AG04450 (cell line): ENCODE measurements at regions of chr14 and their contacts with region 1.

Region 1: GRCh38 chr14:91177073-91178034 is 63.5 kb downstream of the DGLUCY start:
- DNase-seq: no peak
- H3K4me3 ChIP-seq: no peak overlapping the region
- H3K27ac ChIP-seq: no peak overlapping the region
- H3K27me3 ChIP-seq: no peaks in the 10 kb centered on the region
- CTCF ChIP-seq: peak; percentile 83

Region 2: GRCh38 chr14:90903101-90903500 is 274.3 kb before region 1 on chr14:
- CTCF ChIA-PET with region 1: interaction called, 320 read pairs
- POLR2A ChIA-PET with region 1: no interaction called
- DNase-seq: peak; percentile 15
- H3K4me3 ChIP-seq: no peak overlapping the region
- H3K27ac ChIP-seq: no peak overlapping the region
- H3K27me3 ChIP-seq: no peaks in the 10 kb centered on the region
- CTCF ChIP-seq: peak; percentile 72

Region 3: DNA sequence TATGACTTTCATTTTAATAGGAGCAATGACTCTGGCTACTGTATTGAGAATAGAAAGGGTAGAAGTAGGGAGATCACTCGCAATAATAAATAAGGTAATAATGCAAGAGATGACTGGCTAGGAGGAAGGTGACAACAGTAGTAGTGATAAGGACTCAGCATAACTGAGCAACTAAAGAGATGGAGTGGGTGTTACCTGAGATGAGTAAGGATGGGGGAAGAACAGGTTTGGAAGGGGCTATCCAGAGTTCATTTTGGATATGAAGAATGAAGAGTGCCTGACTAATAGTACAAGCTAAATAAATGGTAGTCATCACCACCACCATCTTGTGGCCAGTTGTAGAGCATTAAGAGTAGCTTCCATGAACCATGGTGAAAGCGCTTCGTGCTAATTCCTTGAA is 218.0 kb before region 1 on chr14:
- CTCF ChIA-PET with region 1: no interaction called
- POLR2A ChIA-PET with region 1: no interaction called
- DNase-seq: no peak
- H3K4me3 ChIP-seq: no peak overlapping the region
- H3K27ac ChIP-seq: no peak overlapping the region
- H3K27me3 ChIP-seq: peaks cover 5% of the 10 kb centered on the region
- CTCF ChIP-seq: no peak

Region 4: GRCh38 chr14:90987140-90987539 is 190.2 kb before region 1 on chr14:
- CTCF ChIA-PET with region 1: no interaction called
- POLR2A ChIA-PET with region 1: no interaction called
- DNase-seq: no peak
- H3K4me3 ChIP-seq: no peak overlapping the region
- H3K27ac ChIP-seq: no peak overlapping the region
- H3K27me3 ChIP-seq: no peaks in the 10 kb centered on the region
- CTCF ChIP-seq: no peak

Region 5: DNA sequence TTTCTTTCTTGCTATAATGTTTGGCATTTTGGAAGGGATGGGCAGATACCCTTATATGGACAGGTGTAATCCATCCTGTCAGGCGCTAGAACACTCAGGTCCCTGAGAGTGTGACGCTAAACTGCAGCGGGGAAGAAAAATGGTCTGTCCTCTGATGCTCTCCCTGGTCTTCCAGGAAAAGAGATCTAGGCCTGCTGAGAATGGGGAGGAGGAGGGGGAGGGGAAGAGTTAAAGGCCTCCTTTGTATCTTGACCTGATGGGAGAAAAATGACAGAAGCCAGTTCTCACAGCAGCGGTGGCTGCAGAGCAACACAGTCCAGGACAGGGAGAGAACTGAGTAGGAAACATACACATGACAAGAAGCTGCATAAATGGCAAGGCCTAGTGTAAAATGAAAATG is 178.1 kb before region 1 on chr14:
- CTCF ChIA-PET with region 1: interaction called, 17 read pairs
- POLR2A ChIA-PET with region 1: no interaction called
- DNase-seq: no peak
- H3K4me3 ChIP-seq: no peak overlapping the region
- H3K27ac ChIP-seq: no peak overlapping the region
- H3K27me3 ChIP-seq: no peaks in the 10 kb centered on the region
- CTCF ChIP-seq: no peak

Region 6: GRCh38 chr14:91088585-91089235 is 88.6 kb before region 1 on chr14:
- CTCF ChIA-PET with region 1: no interaction called
- POLR2A ChIA-PET with region 1: no interaction called
- DNase-seq: no peak
- H3K4me3 ChIP-seq: no peak overlapping the region
- H3K27ac ChIP-seq: no peak overlapping the region
- H3K27me3 ChIP-seq: peaks cover 9% of the 10 kb centered on the region
- CTCF ChIP-seq: no peak

Region 7: DNA sequence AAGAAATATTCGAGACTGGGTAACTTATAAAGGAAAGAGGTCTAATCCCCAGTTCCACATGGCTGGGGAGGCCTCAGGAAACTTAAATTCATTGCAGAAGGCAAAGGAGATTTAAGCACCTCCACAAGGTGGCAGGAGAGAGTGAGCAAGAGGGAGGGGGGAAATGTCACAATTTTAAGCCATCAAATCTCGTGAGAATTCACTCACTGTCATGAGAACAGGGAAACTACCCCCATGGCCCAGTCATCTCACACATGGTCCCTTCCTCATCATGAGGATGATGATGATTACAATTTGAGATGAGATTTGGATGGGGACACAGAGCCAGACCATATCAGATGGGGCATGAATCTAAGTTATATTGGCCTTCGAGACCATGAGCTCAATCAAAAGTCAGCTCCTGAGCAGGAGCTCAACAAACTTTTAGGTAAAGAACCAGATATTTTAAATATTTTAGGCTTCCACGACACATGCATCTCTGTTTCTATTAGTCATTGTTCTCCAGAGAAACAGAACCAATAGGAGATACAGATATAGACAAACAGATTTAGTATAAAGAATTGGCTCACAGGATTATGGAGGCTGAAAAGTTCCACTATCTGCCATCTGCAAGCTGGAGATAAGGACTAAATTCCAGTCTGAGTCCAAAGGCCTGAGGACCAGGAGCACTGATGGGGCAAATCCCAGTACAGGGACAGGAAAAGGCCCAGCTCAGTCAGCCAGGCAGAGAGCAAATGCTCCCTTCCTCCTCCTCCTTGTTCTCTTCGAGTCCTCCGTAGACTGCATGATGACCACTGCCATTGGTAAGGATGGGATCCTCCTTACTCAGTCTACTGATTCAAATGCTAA is 38.6 kb before region 1 on chr14:
- CTCF ChIA-PET with region 1: interaction called, 37 read pairs
- POLR2A ChIA-PET with region 1: no interaction called
- DNase-seq: no peak
- H3K4me3 ChIP-seq: no peak overlapping the region
- H3K27ac ChIP-seq: no peak overlapping the region
- H3K27me3 ChIP-seq: no peaks in the 10 kb centered on the region
- CTCF ChIP-seq: peak; percentile 54

Region 8: DNA sequence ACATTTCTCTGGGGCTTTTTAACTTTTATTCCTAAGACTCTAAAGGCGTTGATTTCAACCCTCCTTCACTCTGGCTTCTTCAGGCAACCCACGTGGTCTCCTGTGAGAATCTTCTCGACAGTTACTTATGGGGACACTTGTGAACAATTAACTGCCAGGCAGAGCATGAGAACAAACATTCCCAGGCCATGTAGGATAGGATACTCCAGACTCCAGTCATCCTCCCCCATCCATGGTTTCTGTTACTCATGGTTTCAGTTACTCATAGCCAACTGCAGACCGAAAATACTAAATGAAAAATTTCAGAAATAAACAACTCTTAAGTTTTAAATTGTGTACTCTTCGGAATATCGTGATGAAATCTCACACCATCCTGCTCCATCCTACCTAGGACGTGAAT is 47.7 kb after region 1 on chr14:
- CTCF ChIA-PET with region 1: no interaction called
- POLR2A ChIA-PET with region 1: no interaction called
- DNase-seq: no peak
- H3K4me3 ChIP-seq: no peak overlapping the region
- H3K27ac ChIP-seq: no peak overlapping the region
- H3K27me3 ChIP-seq: no peaks in the 10 kb centered on the region
- CTCF ChIP-seq: no peak

Region 9: DNA sequence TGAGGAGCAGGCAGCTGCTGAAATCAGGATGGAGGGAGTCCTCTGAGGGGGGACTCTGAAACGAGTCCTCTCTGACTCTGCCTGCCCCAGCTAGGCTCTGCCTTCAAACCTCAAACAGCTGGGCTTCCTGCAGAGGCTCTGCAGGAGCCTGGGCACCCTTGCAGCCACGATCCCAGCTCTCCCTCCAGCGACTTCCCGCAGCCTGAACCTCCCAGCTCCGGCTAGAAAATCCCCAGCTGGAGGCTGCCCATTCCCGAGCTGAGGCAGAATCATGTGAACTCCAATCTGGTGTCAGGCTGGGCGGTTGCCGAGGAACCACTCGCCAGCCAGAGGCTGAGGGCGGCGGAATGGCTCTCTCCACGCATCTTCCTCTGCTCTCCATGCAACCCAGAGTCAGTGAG is 67.1 kb after region 1 on chr14 and contains the start of gene GPR68:
- CTCF ChIA-PET with region 1: interaction called, 11 read pairs
- POLR2A ChIA-PET with region 1: no interaction called
- DNase-seq: peak; percentile 46
- H3K4me3 ChIP-seq: peak within 1 kb of the TSS; percentile 31
- H3K27ac ChIP-seq: peak within 1 kb of the TSS; percentile 54
- H3K27me3 ChIP-seq: no peaks in the 10 kb centered on the region
- CTCF ChIP-seq: no peak
- polyA plus RNA-seq, gene GPR68: 0.83 and 1.4 TPM in 2 replicates

Region 10: DNA sequence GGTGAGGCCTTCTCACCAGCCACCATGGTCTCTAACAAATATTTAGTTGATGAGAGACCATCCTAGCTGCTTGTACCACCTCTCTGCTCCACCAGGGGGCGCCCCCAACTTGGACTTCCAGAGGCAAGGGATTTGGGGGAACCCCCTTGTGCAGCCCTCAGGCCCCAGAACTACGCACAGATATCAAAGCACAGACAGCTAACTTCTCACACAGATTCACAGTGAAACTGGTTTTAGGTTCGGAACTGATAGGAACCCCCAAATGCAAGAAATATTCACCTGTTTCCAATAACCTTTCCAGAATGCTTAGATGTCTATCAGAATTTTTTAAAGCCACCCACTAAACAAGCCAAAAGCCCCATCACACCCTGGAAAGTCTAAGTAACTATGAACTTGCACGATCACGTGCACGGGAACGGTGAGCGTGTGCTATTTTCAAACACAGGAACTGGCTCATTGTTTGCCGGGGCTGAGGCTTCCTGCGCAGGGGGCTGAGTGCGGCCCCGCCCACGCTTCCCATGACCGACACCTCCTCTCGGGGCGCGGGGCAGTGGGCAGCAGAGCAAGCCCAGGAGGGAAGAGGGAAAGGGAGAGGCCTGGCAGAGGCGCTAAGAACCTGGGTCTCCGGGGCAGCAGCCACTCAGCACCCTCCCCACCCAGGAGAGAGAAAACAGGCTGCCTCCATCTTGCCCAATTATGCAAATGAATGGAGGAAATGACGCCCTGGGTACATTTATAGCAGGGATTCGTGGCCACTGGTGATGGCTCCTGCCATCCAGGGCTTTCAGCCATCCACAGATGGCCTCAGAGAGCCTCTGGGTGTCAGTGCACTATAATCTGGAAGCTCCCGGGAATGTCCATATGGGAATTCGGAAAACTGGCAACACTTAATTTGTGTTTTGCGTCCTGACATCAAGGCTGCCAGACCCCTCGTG is 146.6 kb after region 1 on chr14:
- CTCF ChIA-PET with region 1: interaction called, 18 read pairs
- POLR2A ChIA-PET with region 1: no interaction called
- DNase-seq: peak; percentile 13
- H3K4me3 ChIP-seq: 0 out of 2 replicates have a peak overlapping the region, but pooled peaks have one; percentile 3
- H3K27ac ChIP-seq: no peak overlapping the region
- H3K27me3 ChIP-seq: peaks cover 21% of the 10 kb centered on the region
- CTCF ChIP-seq: peak; percentile 95